ENCODE measurements at regions of chr18 and their contacts with region 1.

Region 1: DNA sequence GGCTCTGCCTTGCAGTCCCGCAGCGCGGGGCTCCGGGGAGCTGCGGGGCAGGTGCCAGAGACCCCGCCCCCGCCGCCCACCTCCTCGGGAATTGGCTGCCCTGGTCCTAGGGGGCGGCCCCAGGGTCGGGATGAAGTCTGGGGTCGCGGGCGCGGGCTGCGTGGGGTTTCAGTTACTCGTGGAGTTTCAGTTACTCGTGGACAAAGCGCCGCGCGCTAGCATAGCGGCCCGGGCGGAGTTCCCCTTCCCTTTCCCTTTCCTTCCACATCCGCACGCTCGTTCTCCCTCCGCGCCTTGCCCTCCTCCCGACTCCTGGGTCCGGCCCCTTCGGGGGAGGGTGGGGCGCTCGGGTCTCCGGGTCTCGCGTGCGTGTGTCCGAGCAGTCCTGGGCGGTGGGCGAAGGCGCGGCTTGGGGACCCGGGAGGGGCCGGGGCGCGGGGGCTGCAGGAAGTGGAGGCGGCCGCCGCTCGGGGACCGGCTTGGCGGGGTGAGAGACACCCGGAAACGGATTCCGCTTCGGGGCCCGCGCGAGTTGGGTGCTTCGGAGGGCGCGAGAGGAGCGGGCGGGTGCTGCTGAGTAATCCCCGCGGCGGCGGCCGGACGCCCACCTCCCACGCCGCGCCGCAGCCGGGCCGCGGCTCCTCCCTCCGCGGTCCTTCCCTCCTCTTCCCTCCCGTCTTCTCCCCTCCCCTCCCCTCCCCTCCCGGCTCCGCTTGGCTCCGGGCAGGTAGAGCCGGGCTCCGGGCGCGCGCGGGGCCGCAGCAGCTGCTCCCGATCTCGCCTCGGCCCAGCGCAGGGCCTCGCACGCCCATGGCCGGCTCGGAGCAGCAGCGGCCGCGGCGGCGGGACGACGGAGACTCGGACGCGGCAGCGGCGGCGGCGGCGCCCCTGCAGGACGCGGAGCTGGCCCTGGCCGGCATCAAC is at the start of gene TTC39C:
- DNase-seq: peak; percentile 81
- H3K4me3 ChIP-seq: peak within 1 kb of the TSS; percentile 86
- H3K27ac ChIP-seq: peak within 1 kb of the TSS; percentile 55
- H3K4me1 ChIP-seq: peaks cover 81% of the 10 kb centered on the region
- CTCF ChIP-seq: no peak
- total RNA-seq, gene TTC39C: 31.4 and 33.4 TPM in 2 replicates

Region 2: DNA sequence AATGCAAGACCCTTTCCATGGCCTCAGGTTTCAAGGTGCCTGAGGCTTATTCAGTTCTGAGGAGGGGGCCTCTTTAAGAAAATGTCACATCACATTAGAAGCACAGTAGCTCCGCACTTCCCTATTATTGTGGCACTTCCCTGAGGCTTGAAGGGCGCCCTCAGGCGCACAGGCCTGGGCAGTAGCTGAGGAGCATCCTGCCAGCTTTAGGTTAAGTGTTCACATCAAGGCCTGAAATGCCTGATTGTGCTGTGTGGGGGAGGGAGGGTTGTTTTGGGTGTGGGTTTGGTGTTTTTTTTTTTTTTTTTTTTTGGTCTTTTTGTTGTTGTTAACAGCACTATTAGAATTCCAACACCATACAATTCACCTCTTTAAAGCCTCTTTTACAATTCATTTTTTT is 771.1 kb before region 1 on chr18:
- CTCF ChIA-PET with region 1: no interaction called
- POLR2A ChIA-PET with region 1: no interaction called
- intact Hi-C with region 1: loop called (anchors 5 kb)
- DNase-seq: peak; percentile 85
- H3K4me3 ChIP-seq: no peak overlapping the region
- H3K27ac ChIP-seq: peak overlapping the region; percentile 95
- H3K4me1 ChIP-seq: peaks cover 61% of the 10 kb centered on the region
- CTCF ChIP-seq: peak; percentile 84

Region 3: DNA sequence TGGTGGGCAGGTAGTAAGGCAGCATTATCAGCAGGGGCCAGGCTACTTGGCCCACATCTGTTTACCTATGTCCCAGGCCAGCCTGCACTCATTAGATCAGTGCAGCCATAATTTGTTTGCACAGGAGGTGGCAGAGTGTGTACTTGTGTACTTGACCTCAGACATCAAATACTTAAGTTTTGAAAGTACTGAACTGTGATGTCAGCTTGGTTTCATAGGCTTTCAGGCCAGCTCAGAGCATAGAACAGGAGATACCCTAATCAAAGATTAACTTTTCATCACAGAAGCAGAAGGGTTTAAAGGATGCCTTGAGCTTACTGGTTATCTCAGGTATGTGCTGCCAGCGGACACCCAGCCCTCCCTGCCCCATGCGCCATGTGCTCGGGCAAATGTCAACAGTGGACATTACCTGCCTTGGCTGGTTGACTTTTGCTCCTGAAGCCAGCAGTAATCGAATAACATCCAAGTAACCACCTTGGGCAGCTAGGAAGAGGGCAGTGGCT is 384.8 kb before region 1 on chr18:
- CTCF ChIA-PET with region 1: no interaction called
- POLR2A ChIA-PET with region 1: no interaction called
- intact Hi-C with region 1: loop called (anchors 10 kb)
- DNase-seq: no peak
- H3K4me3 ChIP-seq: no peak overlapping the region
- H3K27ac ChIP-seq: no peak overlapping the region
- H3K4me1 ChIP-seq: no peaks in the 10 kb centered on the region
- CTCF ChIP-seq: no peak

Region 4: DNA sequence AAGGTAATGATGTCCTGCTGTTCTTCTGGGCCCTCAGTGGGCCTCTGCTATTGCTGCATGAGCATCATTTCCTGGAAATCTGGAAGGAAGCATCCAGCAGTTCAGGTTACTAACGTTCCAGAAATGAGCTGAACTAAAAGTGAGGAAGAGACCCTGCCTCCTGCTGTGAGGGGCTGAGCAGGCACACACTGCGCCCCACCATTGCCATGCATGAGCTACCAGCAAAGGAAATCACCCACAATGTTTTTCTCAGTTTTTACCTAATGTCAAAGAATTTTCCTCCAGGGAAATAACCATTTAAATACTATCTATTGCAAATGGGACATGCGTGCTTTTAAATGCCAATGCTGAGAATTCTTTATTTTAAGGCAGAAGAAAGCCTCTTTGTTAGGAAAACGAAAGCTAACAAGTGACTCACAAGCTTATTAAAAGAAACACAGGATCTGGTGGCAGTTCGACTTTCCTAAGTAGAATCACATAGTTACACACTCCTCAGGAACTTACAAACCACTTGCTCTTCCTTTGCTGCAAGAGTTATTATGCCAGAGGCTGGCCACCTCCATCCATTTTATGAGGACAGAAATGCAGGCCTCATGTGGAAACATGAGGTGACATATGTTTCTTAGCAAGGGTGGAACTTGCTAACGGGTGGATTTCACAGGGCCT is 152.4 kb before region 1 on chr18:
- CTCF ChIA-PET with region 1: no interaction called
- POLR2A ChIA-PET with region 1: interaction called, 3 read pairs
- intact Hi-C with region 1: loop called (anchors 2 kb)
- DNase-seq: no peak
- H3K4me3 ChIP-seq: no peak overlapping the region
- H3K27ac ChIP-seq: peak overlapping the region; percentile 95
- H3K4me1 ChIP-seq: peaks cover 57% of the 10 kb centered on the region
- CTCF ChIP-seq: no peak

Region 5: GRCh38 chr18:24118750-24119577 is 104.6 kb after region 1 on chr18:
- CTCF ChIA-PET with region 1: no interaction called
- POLR2A ChIA-PET with region 1: no interaction called
- intact Hi-C with region 1: loop called (anchors 2 kb)
- DNase-seq: peak; percentile 82
- H3K4me3 ChIP-seq: no peak overlapping the region
- H3K27ac ChIP-seq: no peak overlapping the region
- H3K4me1 ChIP-seq: no peaks in the 10 kb centered on the region
- CTCF ChIP-seq: peak; percentile 96

Region 6: GRCh38 chr18:24923138-24923537 is 908.8 kb after region 1 on chr18:
- CTCF ChIA-PET with region 1: no interaction called
- POLR2A ChIA-PET with region 1: no interaction called
- intact Hi-C with region 1: loop called (anchors 10 kb)
- DNase-seq: peak; percentile 84
- H3K4me3 ChIP-seq: peak overlapping the region; percentile 55
- H3K27ac ChIP-seq: peak overlapping the region; percentile 95
- H3K4me1 ChIP-seq: peaks cover 78% of the 10 kb centered on the region
- CTCF ChIP-seq: no peak